ENCODE measurements at regions of chr9 and their contacts with region 1.

Region 1: GRCh38 chr9:129737479-129738274 is 15.2 kb downstream of the PTGES start:
- DNase-seq: peak; percentile 70 to 87 (median 85)
- H3K4me3 ChIP-seq: peak overlapping the region; percentile 2 to 81 (median 53)
- H3K27ac ChIP-seq: peak overlapping the region in 1 of 2 experiments; percentile 71
- H3K4me1 ChIP-seq: peaks cover 0 to 6% (median 5%) of the 10 kb centered on the region in 4 experiments
- H3K27me3 ChIP-seq: peaks cover 0 to 17% (median 7%) of the 10 kb centered on the region in 5 experiments

Region 2: DNA sequence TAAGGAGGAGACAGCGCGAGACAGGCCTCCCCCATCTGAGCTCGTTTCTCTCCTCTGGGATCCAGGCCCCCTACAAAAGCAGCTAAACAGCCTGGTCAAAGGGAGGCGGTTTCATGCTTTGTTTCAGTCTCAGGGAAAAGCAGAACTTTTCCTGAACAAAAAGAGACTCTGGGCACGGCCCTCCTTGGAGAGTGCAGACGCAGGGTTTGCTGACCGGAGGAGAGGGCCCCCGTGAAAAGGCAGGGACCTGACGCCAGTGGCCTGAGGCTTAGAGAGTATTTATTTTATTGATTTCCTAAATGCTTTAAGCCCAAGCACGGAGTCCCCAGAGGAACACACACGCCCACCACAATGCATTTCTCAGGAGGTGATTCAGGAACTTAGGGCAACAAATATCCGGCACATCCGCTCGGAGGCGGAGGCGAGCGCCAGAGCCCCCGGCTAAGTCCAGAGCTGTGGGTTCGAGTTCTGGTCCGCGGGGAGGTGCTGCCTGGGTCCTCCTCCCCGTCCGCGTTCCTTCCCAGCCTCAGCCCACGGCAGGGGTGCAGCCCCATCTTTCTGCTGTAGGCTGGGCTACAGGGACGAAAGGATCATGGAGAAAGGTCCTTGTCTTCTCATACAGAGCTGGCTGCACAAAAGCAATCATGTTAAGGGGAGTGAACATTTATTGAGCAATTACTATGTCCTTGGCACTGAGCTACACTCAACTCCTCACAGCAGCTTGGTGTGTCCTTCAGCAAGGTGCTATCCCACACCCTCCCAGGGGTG is 24.9 kb before region 1 on chr9:
- CTCF ChIA-PET with region 1: no interaction called
- POLR2A ChIA-PET with region 1: no interaction called
- DNase-seq: peak in 2 of 3 donors; percentile 35 to 39
- H3K4me3 ChIP-seq: peak overlapping the region in 3 of 7 experiments; percentile 5 to 39 (median 29)
- H3K27ac ChIP-seq: no peak overlapping the region
- H3K4me1 ChIP-seq: peaks cover 4 to 26% (median 22%) of the 10 kb centered on the region in 4 experiments
- H3K27me3 ChIP-seq: peaks cover 0 to 17% (median 6%) of the 10 kb centered on the region in 5 experiments

Region 3: DNA sequence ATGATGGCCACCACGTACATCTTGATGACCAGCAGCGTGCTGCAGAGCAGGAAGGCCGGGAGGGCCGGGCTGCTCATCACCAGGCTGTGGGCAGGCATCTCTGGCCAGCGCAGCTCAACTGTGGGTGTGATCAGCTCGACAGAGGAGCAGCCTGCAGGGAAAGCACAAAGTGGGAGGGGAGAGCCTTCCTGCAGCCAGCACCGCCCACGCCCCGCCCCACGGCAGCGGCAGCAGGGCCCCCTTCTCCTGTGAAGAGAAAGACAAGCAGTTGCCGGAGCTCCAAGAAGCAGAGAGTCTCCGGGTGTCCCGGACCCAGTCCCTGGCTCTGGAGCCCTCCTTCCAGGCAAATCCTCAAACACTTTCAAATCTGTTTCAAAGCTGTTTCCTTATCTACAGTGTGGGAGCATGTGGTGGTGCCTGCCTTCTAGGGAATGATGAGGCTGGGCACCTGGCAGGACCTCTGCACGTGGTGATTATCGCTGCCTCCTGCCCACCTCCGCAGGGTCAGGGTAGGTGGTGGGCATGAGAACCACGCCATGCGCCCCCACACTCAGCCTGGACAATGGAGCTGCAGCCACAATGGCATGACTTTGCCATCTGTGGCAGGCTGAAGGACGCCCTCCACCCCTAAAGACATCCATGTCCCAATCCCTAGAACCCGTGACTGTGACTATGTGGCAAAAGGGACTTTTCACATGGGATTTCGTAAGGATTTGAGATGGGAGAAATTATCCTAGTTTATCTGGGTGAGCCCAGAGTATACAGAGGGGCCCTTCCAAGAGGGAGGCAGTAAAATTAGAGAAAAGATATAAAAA is 15.4 kb after region 1 on chr9 and contains the start of gene PTGES:
- CTCF ChIA-PET with region 1: interaction called, 46 read pairs
- POLR2A ChIA-PET with region 1: no interaction called
- DNase-seq: peak; percentile 31 to 71 (median 71)
- H3K4me3 ChIP-seq: peak within 1 kb of the TSS in 3 of 7 experiments; percentile 11 to 31 (median 24)
- H3K27ac ChIP-seq: no peak within 1 kb of the TSS
- H3K4me1 ChIP-seq: peaks cover 0 to 20% (median 13%) of the 10 kb centered on the region in 4 experiments
- H3K27me3 ChIP-seq: peaks cover 0 to 25% (median 17%) of the 10 kb centered on the region in 5 experiments

Region 4: DNA sequence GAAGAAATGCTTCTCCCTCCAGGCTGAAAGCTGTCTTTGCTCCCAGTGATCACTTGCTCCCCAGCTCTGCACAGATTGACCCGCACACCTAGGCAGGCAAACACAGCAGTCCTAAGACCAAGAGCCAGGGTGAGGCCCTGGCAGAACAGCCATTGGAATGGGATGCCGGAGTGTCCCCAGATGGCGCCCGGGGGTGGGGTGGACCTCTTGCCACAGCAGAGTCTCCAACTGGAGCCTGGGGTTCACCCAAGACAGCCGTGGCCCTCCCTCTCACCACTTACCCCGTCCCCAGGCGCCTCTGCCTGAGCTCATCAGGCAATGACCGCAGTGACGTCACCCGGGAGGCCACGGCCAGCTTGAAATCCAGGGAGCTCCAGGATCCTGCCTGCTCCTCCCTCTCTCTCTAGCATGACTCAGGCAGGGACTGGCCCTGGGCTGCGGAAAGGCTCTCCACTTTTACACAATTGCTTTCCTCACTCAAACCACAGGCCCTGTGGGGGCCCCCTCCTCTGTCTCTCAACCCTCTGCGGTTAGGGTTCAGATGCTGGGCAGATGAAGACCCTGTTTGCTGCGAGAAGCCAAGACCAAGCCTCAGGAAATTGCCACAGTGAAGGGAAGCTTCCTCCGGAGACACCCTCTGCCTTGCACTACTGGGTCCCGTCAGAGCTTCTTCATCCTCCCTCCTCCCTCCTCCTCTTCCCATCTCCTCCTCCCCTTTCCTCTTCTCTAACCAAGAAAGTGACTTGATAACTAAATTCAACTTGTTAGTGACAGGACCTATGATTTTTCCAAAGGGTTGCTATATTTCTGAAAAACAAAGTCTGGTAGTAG is 39.5 kb after region 1 on chr9:
- CTCF ChIA-PET with region 1: interaction called, 155 read pairs
- POLR2A ChIA-PET with region 1: interaction called, 8 read pairs
- DNase-seq: peak; percentile 96 to 99 (median 98)
- H3K4me3 ChIP-seq: peak overlapping the region in 4 of 7 experiments; percentile 30 to 53 (median 33)
- H3K27ac ChIP-seq: peak overlapping the region in 1 of 2 experiments; percentile 50
- H3K4me1 ChIP-seq: peaks cover 7 to 23% (median 20%) of the 10 kb centered on the region in 4 experiments
- H3K27me3 ChIP-seq: peaks cover 0 to 8% (median 0%) of the 10 kb centered on the region in 5 experiments

Region 5: DNA sequence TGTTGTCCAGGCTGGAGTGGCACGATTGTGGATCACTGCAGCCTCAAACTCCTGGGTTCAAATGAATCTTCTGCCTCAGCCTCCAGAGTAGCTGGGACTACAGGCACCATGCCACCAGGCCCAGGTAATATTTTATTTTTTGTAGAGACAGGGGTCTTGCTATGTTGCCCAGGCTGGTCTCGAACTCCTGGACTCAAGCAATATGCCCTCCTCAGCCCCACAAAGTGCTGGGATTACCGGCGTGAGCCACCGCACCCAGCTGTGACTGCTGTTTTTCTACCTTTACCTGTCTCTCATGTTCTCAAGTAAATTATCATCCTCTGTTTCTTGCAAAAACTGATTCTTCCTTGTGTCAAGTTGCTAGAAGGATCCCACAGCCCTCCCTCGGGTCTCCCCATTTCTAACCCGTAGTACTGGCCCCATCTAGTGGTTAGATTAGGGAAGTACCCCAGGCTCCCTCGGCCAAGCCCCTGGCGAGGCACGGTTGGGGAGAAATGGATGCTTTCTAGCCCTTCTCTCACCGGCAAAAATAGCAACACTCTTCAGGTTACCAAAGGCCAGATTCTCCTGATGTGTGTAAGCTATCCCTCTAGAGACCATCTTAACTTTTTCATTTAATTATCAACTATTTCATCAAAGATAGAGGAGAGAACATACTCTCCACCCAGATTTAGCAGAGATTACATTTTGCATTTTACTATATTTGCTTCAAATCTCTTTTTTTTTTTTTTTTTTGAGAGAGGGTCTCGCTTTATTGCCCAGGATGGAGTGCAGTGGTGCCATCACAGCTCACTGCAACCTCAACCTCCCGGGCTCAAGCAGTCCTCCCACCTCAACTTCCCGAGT is 46.1 kb after region 1 on chr9:
- CTCF ChIA-PET with region 1: interaction called, 155 read pairs
- POLR2A ChIA-PET with region 1: no interaction called
- DNase-seq: peak; percentile 75 to 89 (median 81)
- H3K4me3 ChIP-seq: no peak overlapping the region
- H3K27ac ChIP-seq: no peak overlapping the region
- H3K4me1 ChIP-seq: no peaks in the 10 kb centered on the region
- H3K27me3 ChIP-seq: peaks cover 0 to 13% (median 0%) of the 10 kb centered on the region in 5 experiments

Region 6: GRCh38 chr9:129796029-129796910 is 58.6 kb after region 1 on chr9:
- CTCF ChIA-PET with region 1: interaction called, 11 read pairs
- POLR2A ChIA-PET with region 1: no interaction called
- DNase-seq: peak in 1 of 3 donors; percentile 7
- H3K4me3 ChIP-seq: no peak overlapping the region
- H3K27ac ChIP-seq: no peak overlapping the region
- H3K4me1 ChIP-seq: no peaks in the 10 kb centered on the region
- H3K27me3 ChIP-seq: no peaks in the 10 kb centered on the region

Measured in common myeloid progenitor, CD34-positive (primary cell).